Panc1 (cell line): ENCODE measurements at regions of chr12 and their contacts with region 1.

Region 1: DNA sequence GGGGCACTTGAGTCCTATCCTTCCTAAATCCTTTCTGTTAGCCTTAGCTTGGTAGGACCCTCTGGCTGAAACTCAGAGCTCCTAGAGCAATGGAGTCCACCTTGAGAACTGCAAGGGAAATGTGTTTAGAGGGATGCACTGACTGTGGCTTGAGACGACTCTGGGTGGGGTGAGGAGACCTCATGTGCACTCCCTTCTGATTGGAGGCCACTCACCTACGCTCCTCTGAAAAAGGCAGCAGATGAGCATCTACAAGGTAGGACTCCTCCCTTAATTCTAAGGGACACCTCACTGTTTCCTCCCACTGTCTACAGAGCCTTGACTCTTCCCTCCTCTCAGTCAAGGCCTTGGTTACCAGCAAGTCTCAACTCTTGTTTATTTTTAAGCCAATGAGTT is 1.0 kb downstream of the MAP3K12 start:
- DNase-seq: no peak
- ATAC-seq: no peak
- H3K4me3 ChIP-seq: peak overlapping the region; percentile 66 to 80
- H3K27ac ChIP-seq: peak overlapping the region; percentile 46; the same call in 1 of the 2 replicates
- H3K4me1 ChIP-seq: peaks cover 49% of the 10 kb centered on the region
- H3K27me3 ChIP-seq: no peaks in the 10 kb centered on the region
- CTCF ChIP-seq: no peak

Region 2: DNA sequence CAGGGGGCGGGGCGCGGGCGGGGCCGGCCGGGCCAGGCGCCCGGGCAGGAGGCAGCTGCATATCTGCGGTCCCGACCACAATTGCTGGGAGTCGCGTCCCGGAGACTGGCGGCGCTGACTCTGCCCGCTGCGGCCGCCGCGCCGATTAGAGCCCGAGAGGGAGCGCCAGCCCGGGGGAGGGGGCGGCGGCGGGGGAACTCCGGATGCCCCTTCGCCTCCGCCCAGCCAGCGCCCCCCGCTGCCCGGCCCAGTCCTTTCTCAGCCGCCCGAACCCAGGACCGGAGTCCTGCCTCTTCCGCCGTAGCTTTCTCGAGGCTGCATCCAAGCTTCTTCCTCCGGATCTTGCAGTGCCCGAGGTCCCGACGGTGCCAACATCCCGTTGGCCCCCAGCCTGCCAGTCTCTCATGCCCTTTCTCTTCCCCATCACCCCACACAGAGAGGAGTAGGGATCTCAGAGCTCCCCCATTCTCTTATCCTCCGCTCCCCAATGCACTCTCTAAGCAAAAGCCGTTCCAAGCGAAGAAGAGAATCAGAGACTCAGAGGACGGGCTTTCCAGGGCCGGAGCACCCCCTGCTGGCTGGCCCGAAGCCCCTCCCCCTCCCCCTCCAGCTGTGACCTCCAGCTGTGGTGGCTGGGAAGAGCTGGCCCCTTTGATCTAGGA is 153.3 kb before region 1 on chr12:
- CTCF ChIA-PET with region 1: no interaction called
- POLR2A ChIA-PET with region 1: no interaction called
- in situ Hi-C with region 1: no loop called
- intact Hi-C with region 1: no loop called
- DNase-seq: no peak
- ATAC-seq: peak; percentile 90
- H3K4me3 ChIP-seq: peak overlapping the region; percentile 60 to 86
- H3K27ac ChIP-seq: peak overlapping the region; percentile 64
- H3K4me1 ChIP-seq: peaks cover 10% of the 10 kb centered on the region; the same call in 1 of the 2 replicates
- H3K27me3 ChIP-seq: no peaks in the 10 kb centered on the region
- CTCF ChIP-seq: peak; percentile 91

Region 3: GRCh38 chr12:53684654-53685220 is 186.5 kb after region 1 on chr12:
- CTCF ChIA-PET with region 1: no interaction called
- POLR2A ChIA-PET with region 1: interaction called, 16 read pairs
- in situ Hi-C with region 1: no loop called
- intact Hi-C with region 1: no loop called
- DNase-seq: no peak
- ATAC-seq: no peak
- H3K4me3 ChIP-seq: no peak overlapping the region
- H3K27ac ChIP-seq: no peak overlapping the region
- H3K4me1 ChIP-seq: no peaks in the 10 kb centered on the region
- H3K27me3 ChIP-seq: no peaks in the 10 kb centered on the region
- CTCF ChIP-seq: no peak